A549 (cell line): ENCODE measurements at regions of chrX and their contacts with region 1.

Region 1: GRCh38 chrX:39749720-39750119 is 348.0 kb downstream of the BCOR start:
- DNase-seq: no peak
- ATAC-seq: 0 out of 6 replicates have a peak, but pooled peaks of 1 of the 2 experiments have one; percentile 36
- H3K4me3 ChIP-seq: no peak overlapping the region
- H3K27ac ChIP-seq: peak overlapping the region in 1 of 2 experiments; percentile 60; a peak in 2 of 6 replicates
- H3K4me1 ChIP-seq: peaks cover 27% of the 10 kb centered on the region
- CTCF ChIP-seq: no peak
- EP300 ChIP-seq: no peak
- POLR2A ChIP-seq: no peak
- RAD21 ChIP-seq: no peak

Region 2: GRCh38 chrX:39730662-39731397 is 18.9 kb before region 1 on chrX:
- CTCF ChIA-PET with region 1: interaction called, 24 read pairs
- POLR2A ChIA-PET with region 1: interaction called, 3 read pairs
- DNase-seq: peak; percentile 72 to 82
- ATAC-seq: peak; percentile 79 to 93
- H3K4me3 ChIP-seq: no peak overlapping the region
- H3K27ac ChIP-seq: peak overlapping the region; percentile 77 to 78
- H3K4me1 ChIP-seq: peaks cover 48% of the 10 kb centered on the region
- CTCF ChIP-seq: peak; percentile 69
- EP300 ChIP-seq: no peak
- POLR2A ChIP-seq: no peak
- RAD21 ChIP-seq: peak; percentile 93